Activated T-helper 2 cell treated with anti-CD3 and anti-CD28 coated beads, Interferon-gamma antibody, Interleukin-2, Interleukin-4, amounts not matched to agents 10 μg/mL and 5 μg/mL and 100 μg/mL, durations not matched to agents 14 hours and 24 hours and 36 hours (primary cell): ENCODE measurements at regions of chr5 and their contacts with region 1.

Region 1: GRCh38 chr5:140647042-140647341 is 438 bp downstream of the NDUFA2 start:
- DNase-seq: no peak
- H3K4me3 Mint-ChIP-seq: peak overlapping the region; percentile 99
- H3K27ac Mint-ChIP-seq: peak overlapping the region; percentile 99
- H3K4me1 Mint-ChIP-seq: peaks cover 21% of the 10 kb centered on the region
- H3K27me3 Mint-ChIP-seq: no peaks in the 10 kb centered on the region

Region 2: GRCh38 chr5:140595538-140596300 is 51.3 kb before region 1 on chr5:
- intact Hi-C with region 1: no loop called
- DNase-seq: no peak
- H3K4me3 Mint-ChIP-seq: no peak overlapping the region
- H3K27ac Mint-ChIP-seq: no peak overlapping the region
- H3K4me1 Mint-ChIP-seq: no peaks in the 10 kb centered on the region
- H3K27me3 Mint-ChIP-seq: no peaks in the 10 kb centered on the region

Region 3: DNA sequence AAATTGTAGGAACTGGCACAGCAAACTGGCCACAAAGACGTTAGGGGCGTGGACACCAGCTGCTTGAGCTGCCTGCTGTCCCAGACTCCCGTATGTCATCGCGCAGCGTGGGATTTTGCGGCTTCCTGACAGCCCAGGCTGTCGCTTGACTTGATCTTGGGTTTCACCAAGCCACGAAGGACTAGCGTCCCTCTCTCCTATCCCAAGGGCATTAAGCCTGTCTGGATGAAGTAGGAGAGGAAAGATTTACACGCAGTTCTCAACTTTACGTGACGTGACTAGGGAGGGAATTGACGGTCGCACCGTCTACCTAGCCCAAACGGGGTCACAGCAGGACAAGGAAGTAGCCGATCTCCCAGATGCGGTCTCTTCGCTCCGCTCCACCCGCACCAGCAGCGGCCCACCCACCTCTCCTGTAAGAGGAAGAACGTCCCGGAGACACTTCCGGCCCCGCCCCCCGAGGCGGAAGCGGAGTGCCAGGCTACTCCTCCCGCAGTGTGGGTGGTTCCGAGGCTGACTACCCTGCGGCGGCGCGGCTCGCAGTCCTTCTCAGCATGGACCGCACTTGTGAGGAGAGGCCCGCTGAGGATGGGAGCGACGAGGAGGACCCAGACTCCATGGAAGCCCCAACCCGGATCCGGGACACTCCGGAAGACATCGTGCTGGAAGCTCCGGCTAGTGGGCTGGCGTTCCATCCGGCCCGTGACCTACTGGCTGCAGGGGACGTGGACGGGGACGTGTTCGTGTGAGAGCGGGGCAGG is 17.5 kb after region 1 on chr5 and contains the start of gene WDR55:
- intact Hi-C with region 1: loop called (anchors 1 kb)
- DNase-seq: peak; percentile 94
- H3K4me3 Mint-ChIP-seq: peak within 1 kb of the TSS; percentile 99
- H3K27ac Mint-ChIP-seq: peak within 1 kb of the TSS; percentile 95
- H3K4me1 Mint-ChIP-seq: peaks cover 25% of the 10 kb centered on the region
- H3K27me3 Mint-ChIP-seq: no peaks in the 10 kb centered on the region
- total RNA-seq, gene WDR55: 39.1 and 40.0 TPM in 2 replicates

Region 4: GRCh38 chr5:140674629-140675028 is 27.6 kb after region 1 on chr5:
- intact Hi-C with region 1: no loop called
- DNase-seq: no peak
- H3K4me3 Mint-ChIP-seq: no peak overlapping the region
- H3K27ac Mint-ChIP-seq: peak overlapping the region; percentile 52
- H3K4me1 Mint-ChIP-seq: peaks cover 4% of the 10 kb centered on the region
- H3K27me3 Mint-ChIP-seq: no peaks in the 10 kb centered on the region

Region 5: DNA sequence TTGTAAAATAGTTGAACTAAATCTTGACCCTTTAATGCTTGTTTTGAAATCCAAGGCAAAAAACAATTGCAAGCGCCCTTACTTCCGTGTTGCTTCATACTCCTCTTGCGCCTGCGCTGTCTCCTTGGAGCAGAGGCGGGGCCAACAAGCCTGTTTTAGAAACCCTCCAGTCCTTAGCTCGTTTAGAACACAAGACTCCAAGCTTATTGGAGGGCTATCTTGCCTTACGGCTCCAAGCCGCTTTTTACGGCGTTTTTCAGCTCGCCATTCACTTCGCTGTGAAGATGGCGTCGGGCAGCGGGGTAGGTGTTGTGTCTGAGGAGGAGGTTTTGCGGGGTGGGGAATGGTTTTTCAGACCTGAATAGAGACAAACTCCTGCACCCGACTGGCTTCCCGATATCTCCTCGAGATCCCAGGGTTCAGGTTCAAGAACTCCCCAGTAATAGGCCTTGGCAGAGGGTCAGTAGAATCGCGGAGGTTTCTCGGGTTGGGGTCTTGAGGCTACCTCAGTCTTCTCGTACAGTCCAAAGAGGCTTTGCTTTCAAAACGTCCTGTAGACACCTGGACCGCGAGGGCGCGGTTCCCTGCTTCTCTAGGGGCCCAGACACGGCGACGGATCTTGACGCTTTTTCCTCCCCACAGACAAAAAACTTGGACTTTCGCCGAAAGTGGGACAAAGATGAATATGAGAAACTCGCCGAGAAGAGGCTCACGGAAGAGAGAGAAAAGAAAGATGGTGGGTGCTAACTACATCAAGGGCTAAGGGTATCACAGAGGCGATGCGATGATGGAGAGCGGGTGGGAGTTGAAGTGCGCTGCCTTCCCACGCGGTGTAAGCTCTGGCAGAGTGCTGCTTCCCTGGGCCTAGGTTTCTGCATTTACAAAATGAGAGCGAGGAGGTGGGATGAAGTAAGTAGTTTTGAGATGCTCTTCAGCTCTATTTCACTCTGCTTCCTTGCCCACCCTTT is 53.5 kb after region 1 on chr5 and contains the start of gene ZMAT2:
- intact Hi-C with region 1: loop called (anchors 2 kb)
- DNase-seq: peak; percentile 92
- H3K4me3 Mint-ChIP-seq: peak within 1 kb of the TSS; percentile 93
- H3K27ac Mint-ChIP-seq: peak within 1 kb of the TSS; percentile 81
- H3K4me1 Mint-ChIP-seq: peaks cover 15% of the 10 kb centered on the region
- H3K27me3 Mint-ChIP-seq: no peaks in the 10 kb centered on the region
- total RNA-seq, gene ZMAT2: 53.4 and 53.9 TPM in 2 replicates

Region 6: GRCh38 chr5:141564216-141564692 is 917.3 kb after region 1 on chr5:
- intact Hi-C with region 1: loop called (anchors 5 kb)
- DNase-seq: peak; percentile 60
- H3K4me3 Mint-ChIP-seq: no peak overlapping the region
- H3K27ac Mint-ChIP-seq: peak overlapping the region; percentile 85
- H3K4me1 Mint-ChIP-seq: peaks cover 23% of the 10 kb centered on the region
- H3K27me3 Mint-ChIP-seq: no peaks in the 10 kb centered on the region